Activated T-helper 1 cell treated with anti-CD3 and anti-CD28 coated beads, Interleukin-12 subunit alpha, Interleukin-12 subunit beta, Interleukin-2, Interleukin-4 antibody, amounts not matched to agents 30 ng/mL and 10 ng/mL and 1 ng/mL, durations not matched to agents 14 hours and 24 hours and 36 hours (primary cell): ENCODE measurements at regions of chr10 and their contacts with region 1.

Region 1: DNA sequence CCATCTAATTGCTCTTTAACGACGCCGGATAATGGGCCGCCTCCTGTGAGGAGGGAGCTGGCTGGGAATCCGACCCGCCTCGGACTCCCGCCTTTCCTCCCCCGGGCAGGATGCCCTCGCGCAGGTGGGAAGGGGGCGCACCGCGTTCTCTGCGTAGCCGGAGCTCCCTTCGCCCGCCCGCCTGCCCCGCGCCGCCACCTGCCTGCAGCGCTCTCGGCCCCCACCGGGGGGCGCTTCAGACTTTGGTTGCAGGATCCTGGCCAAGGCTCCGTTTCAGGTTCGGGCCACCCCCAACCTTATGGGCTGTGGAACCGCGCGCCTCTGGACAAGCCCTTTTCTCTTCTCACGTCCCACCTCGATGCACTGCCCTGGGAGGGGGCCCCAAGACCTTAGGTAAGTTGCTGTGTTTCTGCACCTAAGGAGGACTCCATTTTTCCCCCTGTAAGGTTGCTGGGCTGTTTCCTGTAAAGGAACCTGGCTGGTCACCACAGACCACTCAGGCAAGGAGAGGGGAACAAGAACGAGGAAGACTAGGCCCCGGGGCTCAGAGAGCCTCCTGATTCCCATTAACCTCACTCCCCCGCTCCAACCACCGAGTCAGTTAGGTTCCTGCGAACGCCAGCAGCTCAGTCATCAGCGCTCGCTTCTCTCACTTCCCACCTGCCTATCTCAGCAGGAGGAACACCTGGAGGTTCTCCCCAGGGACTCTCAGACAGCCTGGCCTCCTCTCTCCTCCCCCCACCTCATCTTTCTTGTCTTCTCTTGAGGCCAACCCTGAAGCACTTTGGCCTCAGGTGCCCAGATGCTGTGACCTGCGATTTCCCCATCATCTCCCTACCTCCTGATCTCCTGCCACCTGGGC is 11.3 kb upstream of the KAZALD1 start:
- DNase-seq: peak; percentile 76
- H3K4me3 Mint-ChIP-seq: peak overlapping the region; percentile 54
- H3K27ac Mint-ChIP-seq: no peak overlapping the region
- H3K4me1 Mint-ChIP-seq: peaks cover 13% of the 10 kb centered on the region
- H3K27me3 Mint-ChIP-seq: peaks cover 46% of the 10 kb centered on the region

Region 2: DNA sequence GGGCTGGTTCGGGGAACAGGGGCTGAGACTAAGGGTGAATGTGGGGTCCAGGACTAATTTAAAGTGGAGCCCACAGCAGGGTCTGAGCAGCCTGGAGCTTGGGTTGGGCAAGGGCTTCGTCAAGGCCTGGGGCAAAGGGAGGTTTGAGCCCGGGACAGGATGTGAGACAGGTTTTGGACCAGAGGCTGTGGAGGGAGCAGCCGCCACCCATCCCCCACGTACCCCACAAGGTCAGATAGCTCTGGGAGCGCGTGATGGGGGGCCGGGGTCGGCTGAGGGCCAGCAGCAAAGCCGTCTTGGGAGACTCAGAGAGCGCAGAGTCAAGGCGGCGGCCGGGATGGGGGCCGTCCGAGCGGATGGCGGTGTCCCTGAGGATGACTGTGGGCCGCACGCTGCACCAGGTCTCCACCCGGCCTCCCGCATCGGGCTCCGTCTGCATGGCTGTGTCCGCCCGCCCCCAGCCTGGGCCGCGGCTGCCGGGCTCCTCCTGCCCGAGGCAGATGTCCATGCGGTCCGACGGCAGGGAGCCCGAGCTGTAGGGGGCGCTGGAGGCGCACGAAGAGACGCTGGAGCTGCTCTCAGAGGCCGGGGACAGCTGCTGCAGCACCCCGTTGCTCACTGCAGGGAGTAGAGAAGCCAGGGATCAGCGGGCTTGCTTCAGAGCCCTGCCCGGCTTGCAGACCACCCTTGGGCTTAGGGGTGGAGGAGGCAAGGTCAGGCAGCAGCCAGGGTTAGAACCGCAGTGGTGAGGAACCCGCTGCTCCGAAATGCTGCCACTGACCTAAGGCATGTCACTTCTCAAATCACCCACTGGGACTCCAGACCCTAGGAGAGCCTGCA is 31.6 kb before region 1 on chr10:
- intact Hi-C with region 1: loop called (anchors 5 kb)
- DNase-seq: peak; percentile 71
- H3K4me3 Mint-ChIP-seq: no peak overlapping the region
- H3K27ac Mint-ChIP-seq: no peak overlapping the region
- H3K4me1 Mint-ChIP-seq: peaks cover 17% of the 10 kb centered on the region
- H3K27me3 Mint-ChIP-seq: peaks cover 34% of the 10 kb centered on the region

Region 3: DNA sequence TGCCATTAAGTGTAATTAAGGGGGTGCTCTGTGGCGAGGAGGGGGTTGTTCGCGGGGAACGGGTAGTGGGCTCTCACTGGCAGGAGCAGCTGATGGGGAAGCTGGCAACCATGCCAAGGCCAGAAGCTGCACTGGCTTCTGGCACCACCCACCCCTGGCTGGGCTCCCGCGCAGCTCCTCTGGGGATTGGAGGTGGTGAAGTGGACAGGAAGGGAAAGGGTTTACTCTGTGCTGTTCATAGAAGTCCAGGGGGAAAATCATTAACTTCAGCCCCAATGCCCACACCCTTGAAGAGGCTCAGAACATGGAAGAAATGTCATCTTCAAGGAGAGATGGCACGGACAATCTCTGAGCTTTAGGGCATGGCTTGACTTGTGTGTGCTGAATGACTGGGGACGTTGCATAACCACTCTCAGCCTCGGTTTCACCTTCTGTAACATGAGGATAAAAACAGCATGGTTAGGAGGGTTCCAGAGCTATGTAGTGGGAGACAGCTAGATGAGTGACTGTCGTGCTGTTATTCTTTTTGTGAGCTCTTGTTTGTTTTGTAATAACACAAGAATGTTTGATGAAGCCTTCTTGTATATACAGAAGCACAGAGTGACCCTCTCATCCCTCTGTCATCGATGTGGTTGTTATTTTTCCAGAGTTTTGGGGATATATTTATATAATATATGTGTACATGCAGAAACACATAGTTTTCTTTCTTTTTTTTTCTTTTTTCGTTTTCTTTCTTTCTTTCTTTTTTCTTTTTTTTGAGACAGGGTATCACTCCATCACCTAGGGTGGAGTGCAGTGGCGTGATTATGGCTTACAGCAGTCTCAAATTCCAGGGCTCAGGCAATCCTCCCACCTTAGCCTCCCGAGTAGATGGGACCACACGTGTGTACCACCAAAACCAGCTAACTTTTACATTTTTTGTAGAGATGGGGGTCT is 41.4 kb after region 1 on chr10:
- intact Hi-C with region 1: no loop called
- DNase-seq: no peak
- H3K4me3 Mint-ChIP-seq: no peak overlapping the region
- H3K27ac Mint-ChIP-seq: no peak overlapping the region
- H3K4me1 Mint-ChIP-seq: peaks cover 6% of the 10 kb centered on the region
- H3K27me3 Mint-ChIP-seq: peaks cover 31% of the 10 kb centered on the region

Region 4: DNA sequence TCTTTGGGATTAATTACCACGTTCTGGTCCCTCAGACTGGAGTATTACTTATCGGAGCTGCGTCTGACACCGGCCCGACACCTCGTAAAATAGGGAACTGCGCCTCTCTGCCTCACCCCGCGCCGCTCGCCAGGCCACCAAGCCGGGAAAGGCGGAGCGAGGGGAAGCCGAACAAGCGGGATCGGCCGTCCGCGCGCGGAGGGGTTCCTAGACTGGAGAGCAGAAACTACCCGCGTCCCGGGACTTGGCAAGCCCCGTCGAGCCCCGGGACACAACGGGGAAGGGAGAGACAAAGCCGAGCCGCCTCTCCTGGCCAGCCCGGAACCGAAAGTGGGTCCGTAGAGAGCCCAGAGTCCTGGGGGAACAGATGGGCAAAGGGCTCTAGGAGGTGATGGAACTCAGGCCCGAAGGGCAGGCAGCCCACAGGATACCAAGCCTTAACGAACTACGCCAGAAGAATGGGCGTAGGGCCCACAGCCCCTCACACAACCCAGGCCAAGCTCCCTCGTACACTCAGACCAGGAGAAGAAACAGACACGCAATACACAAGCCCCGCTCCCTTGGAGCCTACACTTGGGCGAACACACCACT is 172.3 kb after region 1 on chr10:
- intact Hi-C with region 1: loop called (anchors 5 kb)
- DNase-seq: no peak
- H3K4me3 Mint-ChIP-seq: no peak overlapping the region
- H3K27ac Mint-ChIP-seq: no peak overlapping the region
- H3K4me1 Mint-ChIP-seq: peaks cover 19% of the 10 kb centered on the region
- H3K27me3 Mint-ChIP-seq: peaks cover 83% of the 10 kb centered on the region